ENCODE measurements at regions of chr10 and their contacts with region 1.

Region 1: GRCh38 chr10:96229568-96230030 is 41.8 kb downstream of the BLNK start:
- DNase-seq: peak; percentile 86
- H3K4me3 ChIP-seq: no peak overlapping the region
- H3K27ac ChIP-seq: peak overlapping the region in 3 of 4 donors; percentile 53 to 70 (median 57)
- H3K4me1 ChIP-seq: peaks cover 0 to 14% (median 6%) of the 10 kb centered on the region in 4 donors
- H3K27me3 ChIP-seq: no peaks in the 10 kb centered on the region
- CTCF ChIP-seq: peak; percentile 78 to 100 (median 83)
- EP300 ChIP-seq: no peak
- POLR2A ChIP-seq: no peak

Region 2: DNA sequence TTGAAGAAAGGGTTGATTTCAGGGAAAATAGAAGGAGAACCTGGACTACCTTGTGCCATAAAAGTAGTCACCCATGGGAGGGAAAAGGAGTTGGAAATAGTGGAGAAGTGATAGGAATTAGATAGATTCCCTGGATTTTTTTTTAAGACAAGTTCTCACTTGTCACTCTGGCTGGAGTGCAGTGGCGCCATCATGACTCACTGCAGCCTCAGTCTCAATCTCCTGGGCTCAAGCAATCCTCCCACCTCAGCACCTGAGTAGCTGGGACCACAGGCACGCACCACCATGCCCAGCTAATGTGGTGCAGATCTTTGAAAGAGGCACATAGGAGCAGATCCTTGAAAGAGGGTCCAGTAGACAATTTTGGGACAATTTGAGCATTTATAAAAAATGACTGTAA is 51.3 kb after region 1 on chr10:
- in situ Hi-C with region 1: loop called in 1 of 4 experiments (anchors 5 kb)
- intact Hi-C with region 1: no loop called
- DNase-seq: no peak
- H3K4me3 ChIP-seq: no peak overlapping the region
- H3K27ac ChIP-seq: no peak overlapping the region
- H3K4me1 ChIP-seq: peaks cover 0 to 25% (median 12%) of the 10 kb centered on the region in 4 donors
- H3K27me3 ChIP-seq: no peaks in the 10 kb centered on the region
- CTCF ChIP-seq: no peak
- EP300 ChIP-seq: no peak
- POLR2A ChIP-seq: no peak

Region 3: GRCh38 chr10:96292971-96293920 is 63.6 kb after region 1 on chr10:
- in situ Hi-C with region 1: loop called in 2 of 4 experiments (anchors 5 to 10 kb)
- intact Hi-C with region 1: loop called (anchors 5 kb)
- DNase-seq: peak; percentile 35
- H3K4me3 ChIP-seq: no peak overlapping the region
- H3K27ac ChIP-seq: no peak overlapping the region
- H3K4me1 ChIP-seq: peaks cover 0 to 14% (median 0%) of the 10 kb centered on the region in 4 donors
- H3K27me3 ChIP-seq: no peaks in the 10 kb centered on the region
- CTCF ChIP-seq: peak; percentile 57 to 78 (median 64)
- EP300 ChIP-seq: no peak
- POLR2A ChIP-seq: no peak

Region 4: DNA sequence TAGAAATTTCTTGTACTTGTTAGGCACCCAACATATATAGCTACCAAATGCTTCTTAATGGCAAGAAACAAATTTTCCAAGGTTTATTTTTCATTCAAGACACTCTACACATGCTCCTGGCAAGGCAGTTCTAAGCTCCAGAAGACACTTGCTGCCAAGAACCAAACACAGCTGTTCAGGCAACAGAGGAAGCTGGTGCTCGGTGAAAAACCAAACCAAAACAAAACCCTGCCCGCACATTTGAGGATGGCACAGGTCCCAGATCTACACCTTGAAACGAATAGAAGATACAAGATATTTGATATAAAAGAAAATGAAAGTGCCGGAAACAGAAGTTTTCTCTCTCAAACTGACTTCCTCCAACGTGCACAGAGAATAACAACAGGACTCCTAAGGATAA is 69.8 kb after region 1 on chr10:
- in situ Hi-C with region 1: loop called in 2 of 4 experiments (anchors 5 to 10 kb)
- intact Hi-C with region 1: loop called (anchors 5 kb)
- DNase-seq: no peak
- H3K4me3 ChIP-seq: no peak overlapping the region
- H3K27ac ChIP-seq: no peak overlapping the region
- H3K4me1 ChIP-seq: no peaks in the 10 kb centered on the region
- H3K27me3 ChIP-seq: peaks cover 4% of the 10 kb centered on the region
- CTCF ChIP-seq: no peak
- EP300 ChIP-seq: no peak
- POLR2A ChIP-seq: no peak